HEK293T (cell line): ENCODE measurements at regions of chr15 and their contacts with region 1.

Region 1: DNA sequence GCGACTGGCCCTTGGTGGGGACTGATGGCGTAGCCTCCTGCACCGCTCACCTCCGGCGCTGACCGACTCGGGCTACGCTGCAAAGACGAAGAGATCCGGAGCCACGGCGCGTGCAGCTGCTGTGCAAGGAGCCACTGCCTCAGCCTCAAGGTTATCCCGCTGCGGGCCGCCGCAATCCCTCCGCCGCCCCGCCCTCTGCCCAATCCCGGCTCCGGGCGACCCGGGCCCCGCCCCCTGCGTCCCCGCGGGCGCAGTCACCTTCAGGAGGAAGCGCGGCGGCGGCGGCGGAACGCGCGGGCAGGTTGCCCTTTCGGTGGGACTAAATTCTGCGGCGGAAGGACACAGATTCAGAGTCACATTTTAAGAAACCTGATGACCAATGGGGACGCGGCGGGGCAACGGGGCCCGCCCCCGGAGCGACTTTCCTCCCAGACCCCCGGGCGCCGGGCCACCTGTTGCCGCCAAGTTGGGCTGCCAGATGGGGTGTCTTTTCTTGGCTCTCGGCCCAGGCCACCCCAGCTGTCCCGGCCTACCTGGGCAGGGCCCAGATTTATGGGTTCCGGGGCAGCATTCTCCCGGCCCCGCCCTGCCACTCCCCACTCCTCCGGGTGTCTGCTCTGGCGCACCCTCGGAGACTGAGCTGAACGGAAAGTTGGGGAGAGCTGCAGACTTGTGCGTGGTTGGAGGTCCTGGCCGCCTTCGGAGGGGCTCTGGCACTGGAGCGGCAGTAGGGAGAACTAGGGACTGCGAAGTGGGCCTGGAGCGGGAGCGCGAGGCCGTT is at the start of gene PKM:
- DNase-seq: peak; percentile 94

Region 2: GRCh38 chr15:72199711-72200212 is 31.5 kb before region 1 on chr15:
- CTCF ChIA-PET with region 1: interaction called, 12 read pairs
- POLR2A ChIA-PET with region 1: interaction called, 30 read pairs
- DNase-seq: peak; percentile 77

Region 3: DNA sequence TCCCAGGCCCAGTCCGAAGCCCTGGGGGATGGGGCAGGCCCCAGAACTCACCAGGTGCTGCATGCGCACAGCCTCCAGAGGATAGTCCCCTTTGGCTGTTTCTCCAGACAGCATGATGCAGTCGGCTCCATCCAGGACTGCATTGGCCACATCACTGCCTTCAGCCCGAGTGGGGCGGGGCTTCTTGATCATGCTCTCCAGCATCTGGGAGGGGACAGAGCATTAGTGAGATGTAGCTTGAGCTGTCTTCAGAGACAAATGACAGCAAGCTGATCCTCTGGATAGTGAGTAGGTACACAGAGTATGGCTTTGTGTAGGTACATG is 24.6 kb before region 1 on chr15:
- CTCF ChIA-PET with region 1: interaction called, 12 read pairs
- POLR2A ChIA-PET with region 1: interaction called, 30 read pairs
- DNase-seq: no peak

Region 4: GRCh38 chr15:72216079-72216478 is 15.2 kb before region 1 on chr15:
- CTCF ChIA-PET with region 1: interaction called, 11 read pairs
- POLR2A ChIA-PET with region 1: interaction called, 20 read pairs
- DNase-seq: no peak

Region 5: DNA sequence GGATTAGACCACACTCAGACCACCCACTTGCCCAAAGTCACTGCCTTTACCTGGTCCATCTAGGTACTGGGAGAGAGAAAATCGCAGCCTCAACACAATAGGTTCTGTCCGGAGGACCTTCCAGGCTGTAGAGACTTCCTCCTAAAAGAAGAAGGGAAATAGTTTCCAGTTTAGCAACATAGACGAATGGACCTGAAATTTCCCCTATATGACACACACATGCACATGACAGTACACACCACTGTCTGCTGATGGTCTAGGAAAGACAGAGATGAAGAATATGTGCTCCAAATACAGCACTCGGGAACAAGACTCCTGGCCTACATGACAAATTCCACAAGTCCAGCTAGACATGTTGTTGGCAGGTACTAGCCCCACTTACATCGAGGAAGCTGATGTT is 33.8 kb after region 1 on chr15:
- CTCF ChIA-PET with region 1: no interaction called
- POLR2A ChIA-PET with region 1: interaction called, 12 read pairs
- DNase-seq: no peak

Region 6: DNA sequence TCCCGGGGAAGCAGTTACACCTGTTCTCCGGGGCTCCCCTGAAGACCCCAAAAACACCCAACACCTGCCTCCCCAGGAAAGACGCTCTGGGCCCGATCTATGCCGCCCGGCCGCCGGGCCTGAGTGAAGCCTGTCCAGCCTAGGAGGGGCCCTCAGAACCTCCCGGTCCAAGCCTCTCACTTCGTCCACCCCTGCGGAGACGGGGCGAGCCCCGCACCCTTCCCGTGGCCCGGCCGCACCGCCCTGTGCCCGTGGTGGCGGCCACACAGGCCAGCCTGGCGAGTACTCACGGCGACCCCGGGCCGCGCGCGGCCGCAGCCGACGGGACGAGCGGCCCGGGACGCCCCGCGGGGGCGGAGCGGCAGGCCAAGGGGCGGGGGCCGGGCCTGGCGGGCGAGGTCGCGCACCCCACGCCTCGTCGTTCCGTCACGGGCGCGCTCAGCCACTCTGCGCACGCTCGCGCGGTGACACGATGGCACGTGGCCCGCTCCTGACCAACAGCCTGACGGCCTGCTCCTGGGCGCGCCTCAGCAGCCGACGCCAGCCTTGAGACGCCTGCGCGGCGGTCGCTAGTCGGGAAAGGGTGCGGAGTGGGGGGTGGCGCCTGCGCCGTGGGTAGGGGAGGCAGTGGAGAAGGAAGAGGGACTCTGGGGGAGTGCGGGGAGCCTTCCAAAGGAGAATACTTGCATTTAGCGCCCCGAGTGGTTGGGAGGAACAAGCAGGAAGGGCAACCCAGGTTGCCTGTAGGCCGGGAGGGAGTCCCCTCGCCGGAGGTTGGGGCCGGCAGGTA is 41.2 kb after region 1 on chr15 and contains the start of gene PARP6:
- CTCF ChIA-PET with region 1: no interaction called
- POLR2A ChIA-PET with region 1: interaction called, 22 read pairs
- DNase-seq: peak; percentile 98